ENCODE measurements at regions of chr9 and their contacts with region 1.

Region 1: GRCh38 chr9:111992523-111992922 is 95.9 kb downstream of the UGCG start:
- DNase-seq: peak; percentile 61
- H3K4me3 Mint-ChIP-seq: no peak overlapping the region
- H3K27ac Mint-ChIP-seq: no peak overlapping the region
- H3K4me1 Mint-ChIP-seq: peaks cover 31% of the 10 kb centered on the region
- H3K27me3 Mint-ChIP-seq: no peaks in the 10 kb centered on the region

Region 2: DNA sequence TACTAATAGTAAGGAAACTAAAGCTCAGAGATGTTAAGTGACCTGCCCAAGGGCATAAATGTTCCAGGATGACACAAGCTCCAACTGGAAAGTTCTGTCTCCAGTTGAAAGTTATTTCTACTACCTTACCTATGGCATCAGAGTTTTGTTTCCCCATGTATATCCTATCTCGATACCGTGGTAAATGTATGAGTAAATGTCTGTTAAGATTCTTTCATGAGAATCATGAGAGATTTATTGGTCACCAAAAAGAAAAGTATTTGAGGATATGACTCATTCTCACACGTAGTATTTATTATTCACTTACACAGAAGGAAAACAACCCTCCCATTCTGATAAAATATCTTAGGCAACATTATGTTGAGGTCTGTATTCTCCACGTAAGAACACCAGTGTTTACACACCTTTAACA is 186.7 kb before region 1 on chr9:
- CTCF ChIA-PET with region 1: no interaction called
- intact Hi-C with region 1: loop called (anchors 2 kb)
- DNase-seq: no peak
- H3K4me3 Mint-ChIP-seq: no peak overlapping the region
- H3K27ac Mint-ChIP-seq: no peak overlapping the region
- H3K4me1 Mint-ChIP-seq: peaks cover 32% of the 10 kb centered on the region
- H3K27me3 Mint-ChIP-seq: no peaks in the 10 kb centered on the region

Region 3: GRCh38 chr9:111926421-111926875 is 66.1 kb before region 1 on chr9:
- CTCF ChIA-PET with region 1: no interaction called
- intact Hi-C with region 1: no loop called
- DNase-seq: peak; percentile 70
- H3K4me3 Mint-ChIP-seq: no peak overlapping the region
- H3K27ac Mint-ChIP-seq: peak overlapping the region; percentile 46
- H3K4me1 Mint-ChIP-seq: peaks cover 25% of the 10 kb centered on the region
- H3K27me3 Mint-ChIP-seq: no peaks in the 10 kb centered on the region

Region 4: GRCh38 chr9:111965566-111966019 is 26.9 kb before region 1 on chr9:
- CTCF ChIA-PET with region 1: no interaction called
- intact Hi-C with region 1: loop called (anchors 1 kb)
- DNase-seq: peak; percentile 55
- H3K4me3 Mint-ChIP-seq: no peak overlapping the region
- H3K27ac Mint-ChIP-seq: no peak overlapping the region
- H3K4me1 Mint-ChIP-seq: peaks cover 5% of the 10 kb centered on the region
- H3K27me3 Mint-ChIP-seq: no peaks in the 10 kb centered on the region

Region 5: GRCh38 chr9:112037281-112038016 is 44.9 kb after region 1 on chr9:
- CTCF ChIA-PET with region 1: no interaction called
- intact Hi-C with region 1: loop called (anchors 1 kb)
- DNase-seq: peak; percentile 79
- H3K4me3 Mint-ChIP-seq: no peak overlapping the region
- H3K27ac Mint-ChIP-seq: peak overlapping the region; percentile 76
- H3K4me1 Mint-ChIP-seq: peaks cover 45% of the 10 kb centered on the region
- H3K27me3 Mint-ChIP-seq: peaks cover 4% of the 10 kb centered on the region

Region 6: DNA sequence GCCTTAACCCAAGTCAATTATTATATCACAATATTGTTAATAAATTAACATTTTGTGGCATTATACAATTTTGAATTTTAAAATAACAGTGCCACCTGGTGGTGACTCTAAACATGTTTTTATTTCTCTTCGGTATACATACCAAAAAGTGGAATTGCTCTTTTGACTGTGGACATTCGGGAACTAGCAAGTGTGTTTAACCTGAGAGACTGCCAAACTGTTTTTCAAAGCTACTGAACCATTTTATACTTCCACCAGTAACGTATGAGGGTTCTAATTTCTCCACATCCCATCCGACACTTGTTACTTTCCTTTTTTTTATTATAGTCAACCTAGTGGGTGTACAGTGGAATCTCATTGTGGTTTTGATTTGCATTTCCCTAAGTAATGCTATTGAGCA is 369.1 kb after region 1 on chr9:
- CTCF ChIA-PET with region 1: no interaction called
- intact Hi-C with region 1: loop called (anchors 5 kb)
- DNase-seq: no peak
- H3K4me3 Mint-ChIP-seq: no peak overlapping the region
- H3K27ac Mint-ChIP-seq: no peak overlapping the region
- H3K4me1 Mint-ChIP-seq: peaks cover 12% of the 10 kb centered on the region
- H3K27me3 Mint-ChIP-seq: no peaks in the 10 kb centered on the region

Region 7: DNA sequence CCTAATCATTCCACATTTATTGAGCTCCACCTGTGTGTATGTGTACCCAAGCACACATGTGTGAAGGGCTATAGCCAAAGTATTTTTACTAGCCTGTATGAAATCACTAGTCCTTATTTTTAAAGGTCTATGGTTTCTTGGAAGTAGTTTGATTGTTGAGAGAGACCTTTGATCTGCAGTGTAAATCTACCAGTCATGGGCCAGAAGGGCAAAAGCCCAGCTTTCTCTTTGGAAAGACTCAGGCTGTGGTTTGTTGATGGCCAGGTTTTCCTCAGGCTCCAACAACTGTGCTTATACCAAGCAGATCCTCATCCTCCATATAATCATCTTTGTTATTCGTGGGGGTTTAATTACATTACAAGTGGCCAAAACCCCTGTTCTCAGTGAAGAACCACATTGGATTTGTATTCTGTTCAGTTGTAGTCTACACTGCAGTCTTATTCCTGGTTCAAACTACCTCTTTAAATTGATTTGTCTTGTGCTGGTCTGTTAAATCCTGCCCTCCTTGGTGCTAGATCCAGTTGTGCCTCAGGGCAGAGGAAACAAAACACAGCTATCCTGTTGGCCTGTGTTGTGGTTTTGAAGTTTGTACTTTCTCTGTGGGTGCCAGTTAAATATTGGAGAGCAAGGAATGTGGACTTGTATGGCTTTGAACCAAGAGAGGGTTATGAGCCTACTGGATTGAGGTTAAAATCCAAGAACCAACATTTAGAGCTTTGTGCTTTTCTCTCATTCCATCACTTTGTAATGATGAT is 1269.6 kb after region 1 on chr9:
- CTCF ChIA-PET with region 1: no interaction called
- intact Hi-C with region 1: no loop called
- DNase-seq: no peak
- H3K4me3 Mint-ChIP-seq: no peak overlapping the region
- H3K27ac Mint-ChIP-seq: no peak overlapping the region
- H3K4me1 Mint-ChIP-seq: no peaks in the 10 kb centered on the region
- H3K27me3 Mint-ChIP-seq: no peaks in the 10 kb centered on the region